Breast epithelium (tissue), 4 donors: ENCODE measurements at regions of chr6 and their contacts with region 1.

Region 1: DNA sequence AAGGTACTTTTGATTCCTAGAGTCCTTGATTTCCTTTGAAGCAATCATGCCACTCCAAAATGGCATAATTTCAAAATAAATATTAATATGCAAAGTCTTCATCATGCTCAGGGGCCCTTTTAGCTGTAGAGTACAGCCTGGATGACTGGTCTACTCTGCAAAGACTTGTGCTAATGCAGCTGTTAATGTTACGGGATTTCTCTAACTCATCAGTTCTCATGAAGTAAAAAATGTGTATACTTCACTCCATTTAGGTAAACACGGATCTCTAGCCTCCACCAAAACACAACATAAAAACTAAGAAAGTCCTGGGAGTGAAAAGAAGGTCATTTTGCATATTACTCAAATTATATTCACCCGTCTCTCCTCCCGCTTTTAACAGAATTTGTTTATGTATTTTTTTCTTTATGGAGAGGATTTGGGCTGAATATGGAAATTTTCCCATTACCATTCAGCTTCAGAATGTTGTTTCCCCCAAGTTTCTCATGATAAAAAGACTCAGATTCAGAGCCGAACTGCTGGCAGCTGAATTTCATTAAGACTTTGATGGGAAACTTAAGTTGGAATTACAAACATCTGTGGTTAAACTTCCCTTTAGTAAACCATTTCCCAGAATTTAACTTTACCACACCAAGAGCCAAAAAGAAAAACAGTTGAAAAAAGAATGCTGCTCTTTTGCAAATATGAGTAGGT is 8.7 kb downstream of the LAMA4 start:
- DNase-seq: no peak
- H3K4me3 ChIP-seq: peak overlapping the region in 1 of 3 donors; percentile 4
- H3K27ac ChIP-seq: peak overlapping the region; percentile 67 to 91
- H3K4me1 ChIP-seq: no peaks in the 10 kb centered on the region
- H3K27me3 ChIP-seq: no peaks in the 10 kb centered on the region
- CTCF ChIP-seq: no peak
- POLR2A ChIP-seq: no peak

Region 2: DNA sequence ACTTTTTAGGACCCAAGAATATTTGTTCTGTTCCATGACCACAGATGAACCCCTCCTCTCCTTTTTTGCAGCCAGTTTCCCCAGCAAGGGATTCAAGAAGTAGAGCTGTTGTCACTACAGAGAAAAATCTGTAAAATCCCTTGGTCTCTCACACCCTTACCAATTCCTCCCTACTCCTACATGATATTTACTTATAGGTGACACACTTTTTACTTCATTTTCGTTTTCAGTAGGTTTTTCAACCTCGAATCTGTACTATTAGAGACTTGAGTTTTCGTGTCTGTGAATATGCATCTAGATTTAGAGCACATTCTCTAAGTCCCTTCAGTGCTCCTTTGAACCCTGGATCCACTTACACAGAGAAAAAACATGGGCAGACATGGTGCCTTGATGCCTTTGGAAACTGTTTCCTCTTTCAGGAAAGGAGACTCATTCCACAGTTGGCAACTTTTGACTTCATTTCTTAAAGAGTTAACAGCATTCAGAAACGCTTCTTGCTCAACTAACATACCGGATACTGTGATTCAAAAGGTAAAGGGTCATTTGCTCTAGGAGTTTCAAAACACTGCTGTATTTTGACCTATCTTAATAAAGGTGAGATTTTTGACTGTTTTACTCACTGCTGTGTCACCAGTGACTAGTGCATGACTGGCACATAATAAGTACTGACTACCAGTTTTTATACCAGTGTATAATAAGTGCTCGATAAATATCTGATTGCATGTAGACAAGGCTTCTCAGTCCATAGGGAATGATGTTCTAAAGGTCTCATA is 41.9 kb before region 1 on chr6:
- intact Hi-C with region 1: no loop called
- DNase-seq: no peak
- H3K4me3 ChIP-seq: peak overlapping the region in 1 of 3 donors; percentile 8
- H3K27ac ChIP-seq: peak overlapping the region; percentile 41 to 83
- H3K4me1 ChIP-seq: no peaks in the 10 kb centered on the region
- H3K27me3 ChIP-seq: no peaks in the 10 kb centered on the region
- CTCF ChIP-seq: no peak
- POLR2A ChIP-seq: no peak

Region 3: DNA sequence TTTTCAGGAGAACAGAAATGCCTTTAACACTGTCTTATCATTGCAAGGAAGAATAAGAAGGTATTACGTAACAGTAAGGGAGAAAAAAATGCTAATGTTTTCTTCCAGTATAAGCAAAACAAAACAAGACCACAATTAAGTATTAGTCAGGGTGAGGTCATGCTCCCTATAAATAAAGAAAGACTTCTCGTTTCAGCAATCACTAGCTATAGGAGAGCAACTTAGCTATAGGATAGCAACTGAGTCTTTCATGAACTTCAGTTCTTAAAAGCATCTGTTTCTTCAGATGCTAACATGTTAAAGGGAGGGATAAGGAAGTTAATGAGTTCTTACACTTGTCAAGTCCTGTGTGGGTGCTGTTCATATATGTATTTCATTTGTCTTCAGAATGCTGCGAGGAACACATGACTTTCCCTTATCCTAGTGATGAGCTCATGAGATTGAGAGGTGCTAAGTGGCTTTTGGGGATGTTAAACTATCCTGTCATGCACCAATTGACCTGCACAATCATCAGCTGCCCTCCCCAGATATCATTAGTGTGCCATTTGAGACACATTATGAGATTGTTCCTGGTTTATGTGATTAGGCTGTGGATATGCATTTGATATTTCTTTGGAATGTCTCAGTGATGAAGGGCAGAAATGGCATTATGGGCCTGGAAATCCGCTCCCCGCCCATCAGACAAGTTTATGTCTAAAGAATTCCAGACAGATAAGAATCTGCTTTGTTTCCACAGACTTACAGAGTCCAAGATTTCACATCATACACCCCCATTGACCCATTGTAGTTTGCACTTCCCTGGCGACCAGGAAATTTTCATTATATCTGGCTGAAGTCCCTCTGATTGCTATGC is 28.7 kb before region 1 on chr6:
- intact Hi-C with region 1: loop called (anchors 1 kb)
- DNase-seq: no peak
- H3K4me3 ChIP-seq: no peak overlapping the region
- H3K27ac ChIP-seq: peak overlapping the region; percentile 34 to 49
- H3K4me1 ChIP-seq: no peaks in the 10 kb centered on the region
- H3K27me3 ChIP-seq: no peaks in the 10 kb centered on the region
- CTCF ChIP-seq: no peak
- POLR2A ChIP-seq: no peak